PC-9 (cell line): ENCODE measurements at regions of chr11 and their contacts with region 1.

Region 1: GRCh38 chr11:59429924-59430516 is 3.8 kb upstream of the OR5A2 start:
- DNase-seq: peak; percentile 11 to 62
- H3K4me3 ChIP-seq: no peak overlapping the region
- H3K27ac ChIP-seq: no peak overlapping the region
- H3K4me1 ChIP-seq: no peaks in the 10 kb centered on the region
- H3K27me3 ChIP-seq: no peaks in the 10 kb centered on the region
- CTCF ChIP-seq: peak; percentile 94

Region 2: GRCh38 chr11:59040607-59041006 is 389.4 kb before region 1 on chr11:
- CTCF ChIA-PET with region 1: no interaction called
- POLR2A ChIA-PET with region 1: no interaction called
- intact Hi-C with region 1: no loop called
- DNase-seq: no peak
- H3K4me3 ChIP-seq: no peak overlapping the region
- H3K27ac ChIP-seq: no peak overlapping the region
- H3K4me1 ChIP-seq: no peaks in the 10 kb centered on the region
- H3K27me3 ChIP-seq: peaks cover 24% of the 10 kb centered on the region
- CTCF ChIP-seq: no peak

Region 3: DNA sequence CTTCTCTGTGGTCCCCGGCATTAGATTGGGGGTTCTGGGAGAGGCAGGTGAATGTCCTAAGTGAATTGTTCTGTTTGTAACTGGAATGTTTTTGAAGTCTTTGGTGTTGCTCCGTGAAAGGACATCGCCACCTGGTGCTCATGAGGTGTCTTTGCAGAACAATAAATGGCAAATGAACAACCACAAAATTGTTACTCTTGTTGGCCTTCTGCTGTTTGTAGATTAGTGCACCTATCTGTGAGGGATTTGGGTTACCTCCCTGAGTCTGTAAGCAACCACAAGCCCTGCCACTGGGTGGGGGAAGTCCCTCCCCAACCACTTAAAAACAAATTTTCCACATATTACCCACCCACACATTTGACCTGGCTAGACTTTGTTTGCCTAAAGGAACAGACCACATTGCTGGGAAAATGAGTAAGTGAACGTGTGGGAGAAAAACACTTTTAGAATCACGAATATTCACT is 222.0 kb before region 1 on chr11:
- CTCF ChIA-PET with region 1: no interaction called
- POLR2A ChIA-PET with region 1: no interaction called
- intact Hi-C with region 1: loop called (anchors 5 kb)
- DNase-seq: peak; percentile 26 to 62
- H3K4me3 ChIP-seq: no peak overlapping the region
- H3K27ac ChIP-seq: no peak overlapping the region
- H3K4me1 ChIP-seq: no peaks in the 10 kb centered on the region
- H3K27me3 ChIP-seq: no peaks in the 10 kb centered on the region
- CTCF ChIP-seq: peak; percentile 85

Region 4: GRCh38 chr11:59263225-59263894 is 166.7 kb before region 1 on chr11:
- CTCF ChIA-PET with region 1: no interaction called
- POLR2A ChIA-PET with region 1: no interaction called
- intact Hi-C with region 1: loop called (anchors 1 kb)
- DNase-seq: peak in 1 of 2 experiments; percentile 52
- H3K4me3 ChIP-seq: no peak overlapping the region
- H3K27ac ChIP-seq: no peak overlapping the region
- H3K4me1 ChIP-seq: peaks cover 29% of the 10 kb centered on the region
- H3K27me3 ChIP-seq: no peaks in the 10 kb centered on the region
- CTCF ChIP-seq: peak; percentile 73

Region 5: GRCh38 chr11:59401262-59401552 is 28.8 kb before region 1 on chr11:
- CTCF ChIA-PET with region 1: no interaction called
- POLR2A ChIA-PET with region 1: no interaction called
- intact Hi-C with region 1: no loop called
- DNase-seq: no peak
- H3K4me3 ChIP-seq: no peak overlapping the region
- H3K27ac ChIP-seq: no peak overlapping the region
- H3K4me1 ChIP-seq: no peaks in the 10 kb centered on the region
- H3K27me3 ChIP-seq: no peaks in the 10 kb centered on the region
- CTCF ChIP-seq: no peak

Region 6: GRCh38 chr11:59463190-59463641 is 33.2 kb after region 1 on chr11:
- CTCF ChIA-PET with region 1: no interaction called
- POLR2A ChIA-PET with region 1: no interaction called
- intact Hi-C with region 1: no loop called
- DNase-seq: no peak
- H3K4me3 ChIP-seq: no peak overlapping the region
- H3K27ac ChIP-seq: no peak overlapping the region
- H3K4me1 ChIP-seq: no peaks in the 10 kb centered on the region
- H3K27me3 ChIP-seq: peaks cover 18% of the 10 kb centered on the region
- CTCF ChIP-seq: no peak